ENCODE measurements at regions of chr1 and their contacts with region 1.

Region 1: GRCh38 chr1:162056043-162056442 is 13.4 kb upstream of the NOS1AP start:
- H3K4me3 ChIP-seq: no peak overlapping the region
- H3K27ac ChIP-seq: no peak overlapping the region
- H3K4me1 ChIP-seq: no peaks in the 10 kb centered on the region
- CTCF ChIP-seq: peak; percentile 96

Region 2: DNA sequence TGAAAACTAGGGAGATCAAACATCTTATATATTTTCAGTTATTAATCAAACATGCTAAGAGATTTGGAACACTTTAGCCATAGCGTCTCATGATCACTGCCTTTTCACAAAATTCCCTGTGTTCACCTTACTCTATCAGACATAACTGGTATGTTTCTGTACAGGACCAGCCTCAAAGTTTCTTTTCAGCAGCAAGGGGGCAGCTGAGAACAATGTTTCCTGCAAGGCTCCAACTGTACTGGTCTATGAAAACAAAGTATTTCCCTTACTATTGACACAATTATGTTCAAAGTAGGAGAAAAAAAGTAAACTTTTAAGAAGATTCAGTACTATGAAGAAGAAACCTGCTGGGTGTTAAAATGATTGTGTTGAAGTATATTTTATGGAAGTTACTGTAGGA is 191.5 kb before region 1 on chr1:
- CTCF ChIA-PET with region 1: no interaction called
- POLR2A ChIA-PET with region 1: no interaction called
- H3K4me3 ChIP-seq: no peak overlapping the region
- H3K27ac ChIP-seq: no peak overlapping the region
- H3K4me1 ChIP-seq: no peaks in the 10 kb centered on the region
- CTCF ChIP-seq: no peak

Region 3: GRCh38 chr1:162003826-162004208 is 52.2 kb before region 1 on chr1:
- CTCF ChIA-PET with region 1: no interaction called
- POLR2A ChIA-PET with region 1: no interaction called
- H3K4me3 ChIP-seq: no peak overlapping the region
- H3K27ac ChIP-seq: no peak overlapping the region
- H3K4me1 ChIP-seq: peaks cover 5% of the 10 kb centered on the region; the same call in 1 of the 2 replicates
- CTCF ChIP-seq: no peak

Region 4: DNA sequence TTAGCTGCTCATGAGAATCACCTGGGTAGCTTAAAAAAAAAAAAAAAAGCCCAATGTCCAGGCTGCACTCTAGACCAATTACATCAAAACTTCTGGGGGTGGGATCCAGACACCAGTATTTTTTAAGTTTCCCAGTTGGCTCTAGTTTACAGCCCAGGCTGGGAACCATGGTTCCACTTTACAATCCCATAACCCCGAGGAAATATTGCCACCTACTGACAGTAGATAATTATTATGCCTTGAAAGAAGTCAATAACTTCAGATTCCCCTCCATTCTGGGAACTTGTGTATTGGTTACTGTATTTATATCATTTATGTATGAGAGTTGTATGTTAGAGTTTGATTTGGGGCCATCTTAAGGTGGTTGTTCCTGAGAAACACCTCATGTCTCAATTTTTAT is 220.4 kb after region 1 on chr1:
- CTCF ChIA-PET with region 1: interaction called, 53 read pairs
- POLR2A ChIA-PET with region 1: no interaction called
- H3K4me3 ChIP-seq: no peak overlapping the region
- H3K27ac ChIP-seq: no peak overlapping the region
- H3K4me1 ChIP-seq: no peaks in the 10 kb centered on the region
- CTCF ChIP-seq: peak; percentile 53

Region 5: DNA sequence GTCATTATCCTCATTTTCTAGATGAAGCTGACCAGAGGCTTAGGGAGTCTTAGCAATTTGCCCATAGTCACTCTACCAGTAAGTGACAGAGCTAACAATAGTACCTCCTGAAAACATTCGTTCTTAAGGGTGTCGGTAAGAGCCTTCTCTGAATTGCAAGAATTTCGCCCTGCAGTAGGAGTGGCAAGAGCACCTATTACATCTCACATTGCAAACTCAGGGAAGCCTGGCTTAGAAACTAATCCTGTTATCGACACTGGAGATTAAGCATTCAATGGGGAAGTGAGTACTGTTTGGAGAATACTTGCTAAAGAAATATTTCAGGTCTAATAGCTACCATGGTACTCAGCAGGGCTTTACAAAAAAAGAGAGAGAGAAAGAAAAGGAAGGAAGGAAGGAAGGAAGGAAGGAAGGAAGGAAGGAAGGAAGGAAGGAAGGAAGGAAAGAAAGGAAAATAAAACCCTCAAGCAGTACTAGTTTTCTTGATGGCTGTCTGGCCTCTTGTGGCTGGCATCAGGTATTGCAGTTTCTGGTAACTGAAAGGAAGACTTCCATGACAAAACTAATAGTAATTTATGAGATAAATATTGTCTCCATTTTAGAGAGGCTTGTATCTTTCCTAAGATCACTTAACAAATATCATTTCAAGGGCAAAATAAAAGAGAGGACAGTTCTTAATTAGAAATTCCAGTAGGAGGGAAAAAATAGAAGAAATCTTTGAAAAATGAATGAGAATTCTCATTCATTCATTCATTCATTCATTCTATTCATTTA is 335.9 kb after region 1 on chr1:
- CTCF ChIA-PET with region 1: interaction called, 27 read pairs
- POLR2A ChIA-PET with region 1: no interaction called
- H3K4me3 ChIP-seq: no peak overlapping the region
- H3K27ac ChIP-seq: no peak overlapping the region
- H3K4me1 ChIP-seq: no peaks in the 10 kb centered on the region
- CTCF ChIP-seq: peak; percentile 45; the same call in 1 of the 2 replicates